ENCODE measurements at regions of chr7 and their contacts with region 1.

Region 1: DNA sequence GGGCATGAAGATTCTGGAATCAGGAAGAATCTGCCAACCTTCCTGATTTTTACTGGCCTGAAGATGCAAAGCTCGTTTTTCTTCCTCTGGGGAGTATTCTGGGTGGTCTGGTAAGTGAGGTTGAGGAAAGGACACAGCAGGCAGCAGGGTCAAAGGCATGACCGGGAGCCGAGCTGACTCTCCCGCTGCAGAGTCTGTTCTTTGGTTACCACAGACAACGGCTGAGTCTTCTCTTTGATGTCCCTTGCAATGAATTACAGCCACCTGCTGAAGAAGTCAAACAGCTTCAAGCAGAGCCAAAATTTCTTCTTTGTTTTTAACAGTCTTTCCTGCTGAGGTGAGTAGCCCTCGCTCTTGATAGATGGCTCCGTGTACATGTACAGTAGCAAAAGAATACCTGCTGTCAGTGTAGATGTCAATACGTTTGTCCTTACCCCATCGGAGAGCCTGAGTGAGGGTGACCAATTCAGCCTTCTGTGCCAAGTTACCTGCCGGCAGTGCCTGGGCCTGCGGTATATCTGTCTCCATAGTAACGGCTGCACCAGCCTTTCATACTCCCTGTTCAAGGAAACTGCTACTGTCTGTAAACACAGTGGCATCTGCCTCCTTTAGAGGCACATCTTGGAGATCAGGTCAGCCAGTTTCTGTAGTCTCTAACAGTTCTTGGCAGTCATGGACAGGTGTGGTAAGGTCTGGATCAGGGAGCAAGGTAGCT is 76.4 kb downstream of the PRR15 start:
- DNase-seq: no peak
- ATAC-seq: no peak
- H3K4me3 ChIP-seq: no peak overlapping the region
- H3K4me3 Mint-ChIP-seq: no peak overlapping the region
- H3K27ac ChIP-seq: no peak overlapping the region
- H3K27ac Mint-ChIP-seq: no peak overlapping the region
- H3K4me1 ChIP-seq: no peaks in the 10 kb centered on the region
- H3K4me1 Mint-ChIP-seq: no peaks in the 10 kb centered on the region
- H3K27me3 ChIP-seq: no peaks in the 10 kb centered on the region
- H3K27me3 Mint-ChIP-seq: no peaks in the 10 kb centered on the region
- CTCF ChIP-seq: no peak

Region 2: GRCh38 chr7:29748286-29749108 is 108.5 kb after region 1 on chr7:
- CTCF ChIA-PET with region 1: no interaction called
- POLR2A ChIA-PET with region 1: no interaction called
- intact Hi-C with region 1: loop called (anchors 2 kb)
- DNase-seq: no peak
- ATAC-seq: no peak
- H3K4me3 ChIP-seq: no peak overlapping the region
- H3K4me3 Mint-ChIP-seq: no peak overlapping the region
- H3K27ac ChIP-seq: no peak overlapping the region
- H3K27ac Mint-ChIP-seq: no peak overlapping the region
- H3K4me1 ChIP-seq: no peaks in the 10 kb centered on the region
- H3K4me1 Mint-ChIP-seq: no peaks in the 10 kb centered on the region
- H3K27me3 ChIP-seq: no peaks in the 10 kb centered on the region
- H3K27me3 Mint-ChIP-seq: peaks cover 8% of the 10 kb centered on the region
- CTCF ChIP-seq: peak; percentile 12

Measured in B cell (primary cell).